ENCODE measurements at regions of chr15 and their contacts with region 1.

Region 1: GRCh38 chr15:40857601-40858341 is 13.9 kb downstream of the SPINT1 start:
- DNase-seq: peak; percentile 88
- ATAC-seq: peak; percentile 85
- H3K4me3 Mint-ChIP-seq: no peak overlapping the region
- H3K27ac Mint-ChIP-seq: peak overlapping the region; percentile 30
- H3K4me1 Mint-ChIP-seq: peaks cover 15% of the 10 kb centered on the region
- H3K27me3 Mint-ChIP-seq: peaks cover 9% of the 10 kb centered on the region

Region 2: DNA sequence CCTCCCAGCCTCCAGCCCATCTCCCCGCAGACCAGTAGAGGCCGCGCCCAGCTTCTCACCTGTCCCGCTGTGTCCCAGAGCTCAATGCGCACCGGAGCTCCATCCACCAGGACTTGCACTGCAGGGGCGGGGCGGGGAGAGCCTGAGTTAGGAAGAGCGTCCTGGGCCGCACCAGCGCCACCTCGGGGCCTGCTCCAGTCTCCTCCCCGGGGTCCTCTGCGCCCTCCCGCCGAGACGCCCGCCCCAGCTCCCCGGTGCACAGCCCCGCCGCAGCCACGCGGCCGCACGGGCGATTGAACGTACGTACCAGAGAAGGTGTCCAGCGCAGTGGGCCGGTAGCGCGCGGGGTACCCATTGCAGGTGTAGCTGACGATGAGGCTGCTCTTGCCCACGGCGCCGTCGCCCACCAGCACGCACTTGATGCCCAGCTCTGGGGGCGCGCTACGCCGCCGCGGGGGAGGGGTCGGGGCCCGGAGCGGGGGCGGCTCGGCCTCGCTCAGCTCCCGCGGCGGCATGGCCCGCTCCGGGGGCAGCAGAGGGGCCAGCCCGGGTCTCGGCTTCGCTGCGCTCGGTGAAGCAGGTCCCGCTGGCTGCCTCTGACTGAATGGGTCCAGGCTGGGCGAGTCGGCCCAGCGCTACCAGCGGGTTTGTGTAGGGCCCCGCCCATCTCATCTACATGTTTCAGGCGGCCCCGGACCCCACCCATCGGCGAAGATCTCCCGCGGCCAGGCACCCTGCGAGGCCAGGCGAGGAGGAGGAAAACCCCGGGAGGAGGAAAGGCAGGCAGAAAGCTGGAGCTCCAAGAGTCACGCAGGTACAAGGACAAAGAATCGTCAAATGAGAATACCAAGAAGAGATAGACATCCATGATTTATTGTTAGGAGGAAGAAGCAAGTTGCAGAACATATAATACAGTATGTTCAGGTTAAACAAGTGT is 16.1 kb after region 1 on chr15 and contains the start of gene RHOV:
- POLR2A ChIA-PET with region 1: interaction called, 10 read pairs
- DNase-seq: peak; percentile 63
- ATAC-seq: peak; percentile 75
- H3K4me3 Mint-ChIP-seq: peak within 1 kb of the TSS; percentile 80
- H3K27ac Mint-ChIP-seq: no peak within 1 kb of the TSS
- H3K4me1 Mint-ChIP-seq: peaks cover 13% of the 10 kb centered on the region
- H3K27me3 Mint-ChIP-seq: peaks cover 35% of the 10 kb centered on the region
- total RNA-seq, gene RHOV: not detected

Region 3: GRCh38 chr15:40893733-40894688 is 36.2 kb after region 1 on chr15 and contains the start of gene VPS18:
- POLR2A ChIA-PET with region 1: interaction called, 41 read pairs
- DNase-seq: peak; percentile 99
- ATAC-seq: peak; percentile 99
- H3K4me3 Mint-ChIP-seq: peak within 1 kb of the TSS; percentile 98
- H3K27ac Mint-ChIP-seq: peak within 1 kb of the TSS; percentile 99
- H3K4me1 Mint-ChIP-seq: peaks cover 25% of the 10 kb centered on the region
- H3K27me3 Mint-ChIP-seq: peaks cover 6% of the 10 kb centered on the region
- total RNA-seq, gene VPS18: 20.1 to 21.2 TPM

Region 4: DNA sequence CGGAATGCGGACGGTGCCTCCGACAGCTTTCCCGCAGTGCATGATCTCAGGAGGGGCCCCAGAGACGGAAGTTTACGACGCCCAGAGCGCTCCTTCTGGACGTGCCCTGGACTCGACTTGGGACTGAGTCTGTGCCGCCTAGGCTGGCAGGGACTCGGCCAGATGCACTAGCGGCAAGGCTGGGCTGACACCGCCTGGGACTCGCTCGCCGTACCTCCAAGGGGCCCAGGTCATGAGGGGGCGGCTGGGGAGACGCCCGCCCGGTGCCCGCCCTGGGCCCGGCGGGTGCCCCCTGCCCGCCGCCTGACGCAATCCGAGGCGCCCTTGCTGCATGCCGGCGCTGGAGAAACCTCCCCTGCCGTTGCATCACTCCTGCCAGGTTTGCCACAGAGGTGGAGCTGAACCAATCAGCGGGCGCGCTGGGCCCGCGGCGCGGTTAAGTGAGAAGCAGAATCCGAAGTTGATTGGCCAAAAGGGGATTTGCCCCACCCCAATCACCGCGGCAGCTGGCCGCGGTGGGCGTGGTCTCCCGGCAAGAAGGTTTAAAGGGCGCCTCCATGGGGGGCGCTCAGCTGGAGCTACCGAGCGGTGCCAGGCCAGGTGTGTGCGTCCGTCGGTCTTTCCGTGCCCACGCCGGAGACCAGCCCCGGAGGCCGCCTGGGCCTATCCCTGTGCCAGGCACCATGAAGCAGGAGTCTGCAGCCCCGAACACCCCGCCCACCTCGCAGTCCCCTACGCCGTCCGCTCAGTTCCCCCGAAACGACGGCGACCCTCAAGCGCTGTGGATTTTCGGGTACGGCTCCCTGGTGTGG is 95.3 kb after region 1 on chr15 and contains the start of gene CHAC1:
- POLR2A ChIA-PET with region 1: no interaction called
- DNase-seq: peak; percentile 97
- ATAC-seq: peak; percentile 91
- H3K4me3 Mint-ChIP-seq: peak within 1 kb of the TSS; percentile 87
- H3K27ac Mint-ChIP-seq: peak within 1 kb of the TSS; percentile 91
- H3K4me1 Mint-ChIP-seq: peaks cover 32% of the 10 kb centered on the region
- H3K27me3 Mint-ChIP-seq: no peaks in the 10 kb centered on the region
- total RNA-seq, gene CHAC1: 13.9 to 14.1 TPM

Measured in activated naive CD8-positive, alpha-beta T cell treated with anti-CD3 and anti-CD28 coated beads, Interleukin-2, amount 10 ng/mL, durations not matched to agents 7 days and 5 days (primary cell).